AG04450 (cell line): ENCODE measurements at regions of chr10 and their contacts with region 1.

Region 1: GRCh38 chr10:22436884-22437619 is 91.8 kb downstream of the SPAG6 start:
- DNase-seq: peak; percentile 90
- H3K4me3 ChIP-seq: peak overlapping the region; percentile 74
- H3K27ac ChIP-seq: peak overlapping the region; percentile 99
- H3K27me3 ChIP-seq: no peaks in the 10 kb centered on the region
- CTCF ChIP-seq: 0 out of 2 replicates have a peak, but pooled peaks have one; percentile 5

Region 2: GRCh38 chr10:21630450-21630849 is 806.6 kb before region 1 on chr10:
- CTCF ChIA-PET with region 1: no interaction called
- POLR2A ChIA-PET with region 1: interaction called, 13 read pairs
- DNase-seq: no peak
- H3K4me3 ChIP-seq: no peak overlapping the region
- H3K27ac ChIP-seq: no peak overlapping the region
- H3K27me3 ChIP-seq: no peaks in the 10 kb centered on the region
- CTCF ChIP-seq: no peak

Region 3: DNA sequence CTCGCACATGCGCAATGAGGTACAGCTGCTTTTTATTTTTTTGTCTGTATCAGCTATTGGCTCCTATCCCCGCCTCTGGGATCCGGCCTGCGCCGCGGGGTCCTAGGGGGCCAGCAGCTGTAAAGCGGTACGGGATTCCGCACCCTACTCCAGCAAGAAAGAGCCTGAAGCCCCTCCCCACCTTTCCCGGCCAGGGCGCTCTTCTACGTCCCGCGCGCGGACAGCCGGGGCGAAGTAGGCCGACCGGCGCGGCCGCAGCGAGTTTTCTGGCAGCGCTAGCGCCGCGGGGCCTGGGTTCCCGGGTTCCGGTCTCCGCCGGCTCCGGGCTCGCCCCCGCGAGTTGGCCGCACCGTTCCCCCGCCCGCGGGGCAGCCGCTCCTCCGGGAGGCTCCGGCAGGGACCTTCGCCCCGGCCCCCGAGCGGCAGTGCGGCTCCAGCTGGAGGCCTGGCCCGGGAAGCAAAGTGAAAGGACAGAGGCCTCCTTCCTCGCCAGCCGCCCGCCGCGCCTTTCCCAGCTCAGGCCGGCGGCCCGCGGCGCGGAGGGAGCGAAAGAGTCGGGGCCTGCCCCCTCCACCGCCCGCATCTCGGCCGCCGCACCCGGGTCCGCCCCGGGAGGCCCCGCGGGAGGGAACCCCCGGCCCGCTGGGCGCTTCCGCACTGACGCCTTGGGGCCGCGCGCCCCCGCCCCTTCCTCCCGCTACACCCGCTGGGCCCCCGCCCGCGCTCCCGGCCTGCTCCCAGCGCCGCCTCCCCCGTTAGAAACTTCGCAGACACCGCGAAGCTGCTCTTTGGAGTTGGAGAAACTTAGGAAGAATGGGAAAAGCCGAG is 96.5 kb before region 1 on chr10:
- CTCF ChIA-PET with region 1: no interaction called
- POLR2A ChIA-PET with region 1: interaction called, 13 read pairs
- DNase-seq: peak; percentile 55
- H3K4me3 ChIP-seq: peak overlapping the region; percentile 73
- H3K27ac ChIP-seq: peak overlapping the region; percentile 87
- H3K27me3 ChIP-seq: peaks cover 76% of the 10 kb centered on the region
- CTCF ChIP-seq: no peak

Region 4: DNA sequence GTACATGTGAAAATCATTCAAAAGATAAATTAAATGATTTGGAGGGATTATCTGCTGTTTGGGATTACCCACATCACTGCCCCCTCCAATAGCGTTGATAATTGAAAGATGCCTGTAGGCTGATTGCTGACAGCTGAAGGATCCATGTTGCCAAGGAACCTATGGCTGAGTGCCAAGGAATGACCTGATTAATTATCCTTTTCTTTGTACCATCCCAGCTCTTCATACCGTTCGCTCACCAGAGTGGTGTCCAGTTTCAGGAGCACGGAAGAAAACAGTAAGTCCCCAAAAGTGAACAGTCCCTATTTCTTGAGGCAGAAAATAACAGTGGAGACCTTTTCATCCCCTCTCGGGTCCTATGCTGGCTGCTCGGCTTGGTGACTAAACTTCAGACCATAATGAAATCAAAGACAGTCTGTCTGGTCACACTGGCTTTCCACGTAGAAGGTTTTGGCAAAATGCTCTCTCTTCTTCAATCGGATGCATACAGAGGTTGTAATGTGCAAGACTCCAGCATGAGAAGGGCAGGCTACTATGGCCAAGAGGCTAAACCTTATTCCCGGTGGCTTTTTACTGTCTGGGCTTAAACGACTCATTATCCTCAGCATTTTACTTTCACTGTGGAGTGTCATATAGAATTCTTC is 17.0 kb after region 1 on chr10:
- CTCF ChIA-PET with region 1: no interaction called
- POLR2A ChIA-PET with region 1: no interaction called
- DNase-seq: no peak
- H3K4me3 ChIP-seq: no peak overlapping the region
- H3K27ac ChIP-seq: no peak overlapping the region
- H3K27me3 ChIP-seq: peaks cover 15% of the 10 kb centered on the region
- CTCF ChIP-seq: no peak